ENCODE measurements at regions of chr9 and their contacts with region 1.

Region 1: DNA sequence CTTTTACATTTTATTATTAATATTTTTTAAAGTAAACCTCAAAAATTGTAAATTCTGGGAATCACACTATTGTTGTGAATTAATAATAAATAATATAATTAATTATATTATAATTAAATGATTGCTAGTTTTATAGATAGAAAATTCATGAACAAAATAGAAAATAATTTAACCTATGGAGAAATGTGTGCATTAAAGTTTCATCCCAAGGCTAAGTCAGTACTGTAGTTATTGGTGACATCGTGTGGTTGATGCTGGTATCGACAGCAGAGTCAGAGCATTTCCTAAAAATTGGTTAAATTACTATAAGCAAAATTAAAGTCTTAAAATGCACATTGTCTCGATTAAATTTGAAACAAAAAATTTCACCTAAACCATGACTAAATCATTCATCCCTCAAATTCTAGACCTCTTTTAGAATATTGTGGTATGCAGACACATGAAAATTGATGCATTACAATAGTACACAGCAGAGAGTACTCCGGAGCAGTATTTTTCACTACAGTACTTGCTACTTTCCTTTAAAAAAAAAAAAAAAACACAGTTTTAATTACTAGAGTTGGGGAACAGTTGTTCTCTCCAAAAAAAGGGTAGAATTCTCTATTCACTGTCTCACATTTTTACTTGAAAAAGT is 73.9 kb downstream of the RORB start:
- DNase-seq: no peak
- ATAC-seq: peak; percentile 48; the same call in 2 of the 3 replicates
- H3K4me3 ChIP-seq: no peak overlapping the region
- H3K27ac ChIP-seq: no peak overlapping the region
- H3K4me1 ChIP-seq: peaks cover 3% of the 10 kb centered on the region; the same call in 1 of the 2 replicates
- H3K27me3 ChIP-seq: no peaks in the 10 kb centered on the region
- CTCF ChIP-seq: peak; percentile 60 to 79 (median 71)
- EP300 ChIP-seq: no peak
- POLR2A ChIP-seq: no peak
- RAD21 ChIP-seq: peak; percentile 72

Region 2: DNA sequence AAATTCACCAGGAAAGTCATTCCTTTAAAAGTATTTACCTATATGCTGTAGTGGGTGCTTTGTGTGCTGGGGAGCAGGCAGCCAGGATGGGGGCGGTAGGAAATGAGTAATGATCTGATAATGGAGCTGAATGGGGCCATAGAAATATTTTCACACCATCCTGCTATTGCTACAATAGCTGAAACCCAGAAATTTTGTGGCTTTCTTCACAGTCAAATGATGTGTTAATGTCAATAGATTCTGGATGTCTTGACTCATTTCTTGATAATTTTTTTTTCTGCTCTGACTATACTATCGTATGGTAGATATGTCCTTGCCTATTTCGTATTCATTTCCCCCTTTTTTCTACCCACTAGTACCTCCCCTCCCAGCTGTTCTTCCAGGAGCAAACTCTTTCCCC is 14.3 kb before region 1 on chr9:
- CTCF ChIA-PET with region 1: interaction called, 5 read pairs
- POLR2A ChIA-PET with region 1: no interaction called
- RAD21 ChIA-PET with region 1: interaction called, 3 read pairs
- SMC1A ChIA-PET with region 1: interaction called, 10 read pairs
- in situ Hi-C with region 1: no loop called
- intact Hi-C with region 1: no loop called
- DNase-seq: no peak
- ATAC-seq: peak; percentile 74
- H3K4me3 ChIP-seq: peak overlapping the region; percentile 6; the same call in 1 of the 2 replicates
- H3K27ac ChIP-seq: no peak overlapping the region
- H3K4me1 ChIP-seq: peaks cover 3% of the 10 kb centered on the region
- H3K27me3 ChIP-seq: no peaks in the 10 kb centered on the region
- CTCF ChIP-seq: no peak
- EP300 ChIP-seq: 0 out of 4 replicates have a peak, but pooled peaks of 1 of the 2 experiments have one; percentile 45
- POLR2A ChIP-seq: no peak
- RAD21 ChIP-seq: no peak